HepG2 (cell line): ENCODE measurements at regions of chr17 and their contacts with region 1.

Region 1: GRCh38 chr17:50397111-50397918 is at the start of gene LRRC59:
- DNase-seq: peak; percentile 81
- ATAC-seq: peak; percentile 93
- H3K4me3 ChIP-seq: peak within 1 kb of the TSS; percentile 73 to 99 (median 99)
- H3K27ac ChIP-seq: peak within 1 kb of the TSS; percentile 85
- H3K4me1 ChIP-seq: peaks cover 27% of the 10 kb centered on the region
- H3K27me3 ChIP-seq: peaks cover 0 to 3% of the 10 kb centered on the region in 2 experiments; a peak in 1 of 5 replicates
- CTCF ChIP-seq: peak; percentile 100
- EP300 ChIP-seq: peak; percentile 56 to 73; a peak in 3 of 4 replicates
- POLR2A ChIP-seq: peak; percentile 91 to 96
- RAD21 ChIP-seq: peak; percentile 92
- total RNA-seq, gene LRRC59: 222 and 239 TPM in 2 replicates

Region 2: DNA sequence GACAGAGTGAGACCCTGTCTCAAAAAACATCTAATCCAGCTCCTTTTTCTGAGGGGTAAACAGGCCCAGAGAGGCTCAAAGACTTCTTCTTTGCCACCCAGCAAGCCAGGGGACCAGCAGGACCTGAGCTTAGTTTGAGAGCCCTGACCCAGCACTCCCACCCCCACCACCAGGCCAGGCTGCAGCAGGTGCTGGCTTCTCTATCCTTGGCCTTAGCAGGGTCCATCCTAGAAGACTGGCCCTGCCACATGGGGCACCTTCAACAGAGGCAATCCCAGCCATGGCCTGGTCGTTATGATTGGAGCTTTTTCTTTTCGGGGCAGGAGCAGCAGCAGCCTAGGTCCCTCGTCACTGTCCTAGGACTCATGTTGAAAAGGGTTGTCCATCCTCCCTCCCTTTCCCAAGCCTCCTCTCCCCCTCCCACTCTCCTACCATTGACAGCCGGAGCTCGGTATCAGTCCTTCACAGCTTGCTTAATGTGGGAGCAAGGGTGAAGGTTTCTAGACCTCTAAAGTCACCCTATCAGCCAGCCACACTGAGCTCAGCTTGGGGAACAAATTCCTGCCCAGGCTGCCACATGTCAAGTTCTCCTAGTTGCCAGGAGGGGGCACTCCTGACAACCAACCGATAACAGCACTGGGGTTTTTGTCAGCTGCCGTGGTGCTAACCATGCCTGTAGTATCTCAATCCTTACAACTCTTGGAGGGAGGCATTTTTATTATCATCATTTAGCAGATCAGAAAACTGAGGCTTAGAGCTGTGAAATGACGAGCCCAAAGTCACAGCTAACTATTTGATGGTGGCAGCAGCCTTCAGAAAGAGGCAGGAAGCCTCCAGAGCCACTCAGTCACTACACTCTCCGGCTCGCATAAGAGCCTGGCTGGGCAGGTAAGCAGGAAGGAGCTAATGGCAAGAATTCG is 35.5 kb before region 1 on chr17:
- CTCF ChIA-PET with region 1: interaction called, 3 read pairs
- POLR2A ChIA-PET with region 1: interaction called, 12 read pairs
- in situ Hi-C with region 1: no loop called
- intact Hi-C with region 1: no loop called
- DNase-seq: peak; percentile 75
- ATAC-seq: peak; percentile 70
- H3K4me3 ChIP-seq: no peak overlapping the region
- H3K27ac ChIP-seq: peak overlapping the region; percentile 24
- H3K4me1 ChIP-seq: peaks cover 44% of the 10 kb centered on the region
- H3K27me3 ChIP-seq: no peaks in the 10 kb centered on the region
- CTCF ChIP-seq: peak; percentile 90
- EP300 ChIP-seq: no peak
- POLR2A ChIP-seq: peak; percentile 13 to 44; a peak in 1 of 4 replicates
- RAD21 ChIP-seq: peak; percentile 76

Region 3: GRCh38 chr17:50380369-50381259 is 16.7 kb before region 1 on chr17:
- CTCF ChIA-PET with region 1: no interaction called
- POLR2A ChIA-PET with region 1: interaction called, 19 read pairs
- in situ Hi-C with region 1: no loop called
- intact Hi-C with region 1: no loop called
- DNase-seq: no peak
- ATAC-seq: peak; percentile 18
- H3K4me3 ChIP-seq: no peak overlapping the region
- H3K27ac ChIP-seq: no peak overlapping the region
- H3K4me1 ChIP-seq: no peaks in the 10 kb centered on the region
- H3K27me3 ChIP-seq: no peaks in the 10 kb centered on the region
- CTCF ChIP-seq: peak; percentile 27; the same call in 1 of the 2 replicates
- EP300 ChIP-seq: no peak
- POLR2A ChIP-seq: peak in 1 of 2 experiments; percentile 60; a peak in 3 of 4 replicates
- RAD21 ChIP-seq: no peak; the same call in 1 of the 2 replicates

Region 4: DNA sequence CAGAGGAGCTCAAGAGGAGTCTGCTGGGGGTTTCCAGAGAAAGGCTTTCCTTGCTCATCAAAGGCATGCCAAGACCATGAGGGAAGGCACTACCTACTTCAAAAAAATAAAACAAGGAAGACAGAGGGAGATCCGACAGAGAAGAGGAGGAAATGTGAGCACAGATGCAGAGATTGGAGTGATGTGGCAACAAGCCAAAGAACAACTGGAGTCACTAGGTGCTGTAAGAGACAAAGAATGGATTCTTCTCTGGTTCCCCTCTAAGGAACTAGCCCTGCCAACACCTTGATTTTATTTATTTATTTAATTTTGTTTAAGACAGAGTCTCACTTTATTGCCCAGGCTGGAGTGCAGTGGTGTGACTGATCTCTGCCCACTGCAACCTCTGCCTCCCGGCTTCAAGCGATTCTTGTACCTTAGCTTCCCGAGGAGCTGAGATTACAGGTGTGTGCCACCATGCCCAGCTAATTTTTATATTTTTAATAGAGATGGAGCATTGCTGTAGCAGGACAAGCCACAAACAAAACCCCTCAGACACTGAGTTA is 14.9 kb after region 1 on chr17:
- CTCF ChIA-PET with region 1: no interaction called
- POLR2A ChIA-PET with region 1: interaction called, 11 read pairs
- in situ Hi-C with region 1: no loop called
- intact Hi-C with region 1: no loop called
- DNase-seq: no peak
- ATAC-seq: no peak; the same call in 2 of the 3 replicates
- H3K4me3 ChIP-seq: no peak overlapping the region
- H3K27ac ChIP-seq: no peak overlapping the region
- H3K4me1 ChIP-seq: peaks cover 16% of the 10 kb centered on the region
- H3K27me3 ChIP-seq: no peaks in the 10 kb centered on the region; a peak in 1 of 5 replicates
- CTCF ChIP-seq: no peak
- EP300 ChIP-seq: no peak
- POLR2A ChIP-seq: no peak
- RAD21 ChIP-seq: no peak

Region 5: DNA sequence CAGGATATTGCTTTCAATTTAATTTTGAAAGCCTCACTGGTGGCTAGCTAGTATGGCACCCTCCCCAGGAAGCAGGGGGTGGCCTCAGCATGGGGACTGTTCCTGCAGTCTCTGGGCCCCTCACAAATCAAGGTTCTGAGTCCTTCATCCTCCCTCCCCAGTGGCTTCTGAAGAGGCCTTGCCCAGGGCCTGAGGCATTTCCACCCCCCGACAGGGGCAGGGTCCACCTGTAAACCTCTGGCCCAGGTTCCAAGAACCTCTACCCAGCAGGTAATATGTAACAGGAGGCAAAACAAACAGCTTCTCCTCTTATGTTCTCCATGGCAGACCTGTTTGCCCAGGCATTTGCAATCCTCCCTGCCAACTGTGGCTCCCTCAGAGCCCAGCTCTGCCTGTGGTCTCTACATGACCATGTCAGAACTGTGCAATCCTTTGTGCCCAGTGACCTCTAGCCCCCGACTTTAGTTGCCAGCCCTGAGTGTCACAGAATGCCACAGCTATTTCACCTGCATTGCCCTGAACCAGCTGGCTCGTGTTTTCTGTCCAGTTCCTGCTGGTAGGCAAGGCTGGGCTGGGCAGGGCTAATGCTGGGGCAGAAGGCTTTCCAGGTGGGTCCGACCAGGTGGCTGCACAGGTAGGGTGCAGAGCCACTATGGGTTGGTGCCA is 43.0 kb after region 1 on chr17:
- CTCF ChIA-PET with region 1: no interaction called
- POLR2A ChIA-PET with region 1: interaction called, 10 read pairs
- in situ Hi-C with region 1: no loop called
- intact Hi-C with region 1: no loop called
- DNase-seq: peak; percentile 67
- ATAC-seq: peak; percentile 90
- H3K4me3 ChIP-seq: 0 out of 6 replicates have a peak overlapping the region, but pooled peaks of 1 of the 3 experiments have one; percentile 1
- H3K27ac ChIP-seq: peak overlapping the region; percentile 58
- H3K4me1 ChIP-seq: peaks cover 52% of the 10 kb centered on the region
- H3K27me3 ChIP-seq: no peaks in the 10 kb centered on the region
- CTCF ChIP-seq: no peak
- EP300 ChIP-seq: no peak
- POLR2A ChIP-seq: no peak
- RAD21 ChIP-seq: 0 out of 2 replicates have a peak, but pooled peaks have one; percentile 19